ENCODE measurements at regions of chr14 and their contacts with region 1.

Region 1: DNA sequence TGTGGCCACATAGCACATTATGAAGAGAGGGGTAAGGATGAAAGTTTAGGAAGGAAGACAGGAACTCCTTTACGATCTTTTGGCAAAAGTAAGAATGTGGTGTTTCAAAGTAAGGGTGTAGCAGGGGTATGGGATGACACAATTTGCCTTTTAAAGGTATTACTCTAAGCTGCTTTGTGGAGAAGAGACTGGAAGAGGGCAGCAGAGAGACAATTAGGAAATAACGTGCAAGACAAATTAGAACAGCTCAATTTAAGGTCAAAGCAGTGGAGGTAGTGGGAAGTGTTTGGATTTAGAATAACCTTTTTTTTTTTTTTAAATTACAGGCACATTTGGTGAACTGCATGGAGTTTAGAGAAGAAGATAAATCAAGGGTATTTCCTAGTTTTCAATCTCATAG is 342.6 kb downstream of the NOVA1 start:
- DNase-seq: peak; percentile 31
- ATAC-seq: peak; percentile 63
- H3K4me3 ChIP-seq: no peak overlapping the region
- H3K27ac ChIP-seq: no peak overlapping the region
- H3K4me1 ChIP-seq: no peaks in the 10 kb centered on the region
- H3K27me3 ChIP-seq: no peaks in the 10 kb centered on the region
- CTCF ChIP-seq: peak; percentile 56
- POLR2A ChIP-seq: no peak
- RAD21 ChIP-seq: peak; percentile 59

Region 2: DNA sequence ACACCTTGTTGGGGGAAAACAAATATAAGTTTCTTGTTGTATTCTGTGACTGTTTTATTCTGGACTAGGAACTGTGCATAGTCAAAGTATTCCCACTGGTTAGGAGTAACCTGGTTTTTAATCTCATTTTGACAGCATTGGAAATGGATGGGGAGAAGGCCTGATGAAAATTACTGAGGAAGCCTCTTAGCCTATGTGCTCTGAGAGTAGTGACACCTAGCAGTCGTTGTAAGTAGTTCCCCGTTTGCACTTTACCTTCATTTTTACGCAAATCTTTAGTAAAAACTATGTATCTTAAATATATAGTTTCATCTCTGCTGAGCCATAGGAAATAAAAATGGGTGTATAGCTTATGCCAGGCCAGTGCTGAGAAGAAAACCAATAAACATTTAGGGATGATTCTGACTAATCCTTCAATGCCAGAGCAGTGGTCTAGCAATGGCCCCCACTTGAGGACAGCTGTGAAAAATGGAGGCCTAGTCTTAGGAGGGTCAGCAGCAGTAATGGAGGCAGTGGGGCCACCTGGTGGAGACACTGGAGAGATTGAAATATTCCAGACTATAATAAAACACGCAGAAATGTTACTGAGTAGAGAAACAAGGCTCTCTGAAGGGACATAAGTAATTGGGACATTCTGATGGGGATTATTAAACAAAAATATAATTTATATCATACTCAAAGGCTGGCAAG is 475.9 kb after region 1 on chr14:
- CTCF ChIA-PET with region 1: no interaction called
- POLR2A ChIA-PET with region 1: no interaction called
- dilution Hi-C with region 1: no loop called
- in situ Hi-C with region 1: no loop called
- intact Hi-C with region 1: loop called (anchors 1 kb)
- DNase-seq: peak; percentile 3
- ATAC-seq: peak; percentile 57; the same call in 1 of the 2 replicates
- H3K4me3 ChIP-seq: no peak overlapping the region
- H3K27ac ChIP-seq: no peak overlapping the region
- H3K4me1 ChIP-seq: no peaks in the 10 kb centered on the region
- H3K27me3 ChIP-seq: no peaks in the 10 kb centered on the region
- CTCF ChIP-seq: peak; percentile 50
- POLR2A ChIP-seq: no peak
- RAD21 ChIP-seq: peak; percentile 56

Region 3: DNA sequence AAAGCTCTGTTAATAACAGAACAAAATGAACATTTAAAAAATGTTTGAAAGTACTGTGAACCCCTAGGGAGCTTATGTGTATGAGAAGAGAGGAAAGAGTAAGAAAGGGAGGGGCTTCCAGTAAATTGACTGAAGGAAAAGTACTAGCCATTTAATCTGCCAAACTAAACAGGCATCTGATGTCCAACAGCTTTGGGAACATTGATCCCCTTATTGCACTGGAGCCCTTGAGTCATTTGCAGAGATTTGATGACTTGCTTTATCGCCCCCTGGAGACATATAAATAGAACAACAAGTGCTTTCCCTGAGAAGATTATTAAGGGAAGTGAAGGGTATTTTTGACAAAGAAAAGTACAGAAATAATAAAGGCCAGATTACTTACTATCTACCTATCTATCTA is 661.9 kb after region 1 on chr14:
- CTCF ChIA-PET with region 1: no interaction called
- POLR2A ChIA-PET with region 1: no interaction called
- dilution Hi-C with region 1: no loop called
- in situ Hi-C with region 1: no loop called
- intact Hi-C with region 1: loop called (anchors 5 kb)
- DNase-seq: peak; percentile 2
- ATAC-seq: no peak
- H3K4me3 ChIP-seq: no peak overlapping the region
- H3K27ac ChIP-seq: no peak overlapping the region
- H3K4me1 ChIP-seq: no peaks in the 10 kb centered on the region
- H3K27me3 ChIP-seq: no peaks in the 10 kb centered on the region
- CTCF ChIP-seq: peak; percentile 44
- POLR2A ChIP-seq: no peak
- RAD21 ChIP-seq: peak; percentile 37; the same call in 1 of the 2 replicates

Region 4: DNA sequence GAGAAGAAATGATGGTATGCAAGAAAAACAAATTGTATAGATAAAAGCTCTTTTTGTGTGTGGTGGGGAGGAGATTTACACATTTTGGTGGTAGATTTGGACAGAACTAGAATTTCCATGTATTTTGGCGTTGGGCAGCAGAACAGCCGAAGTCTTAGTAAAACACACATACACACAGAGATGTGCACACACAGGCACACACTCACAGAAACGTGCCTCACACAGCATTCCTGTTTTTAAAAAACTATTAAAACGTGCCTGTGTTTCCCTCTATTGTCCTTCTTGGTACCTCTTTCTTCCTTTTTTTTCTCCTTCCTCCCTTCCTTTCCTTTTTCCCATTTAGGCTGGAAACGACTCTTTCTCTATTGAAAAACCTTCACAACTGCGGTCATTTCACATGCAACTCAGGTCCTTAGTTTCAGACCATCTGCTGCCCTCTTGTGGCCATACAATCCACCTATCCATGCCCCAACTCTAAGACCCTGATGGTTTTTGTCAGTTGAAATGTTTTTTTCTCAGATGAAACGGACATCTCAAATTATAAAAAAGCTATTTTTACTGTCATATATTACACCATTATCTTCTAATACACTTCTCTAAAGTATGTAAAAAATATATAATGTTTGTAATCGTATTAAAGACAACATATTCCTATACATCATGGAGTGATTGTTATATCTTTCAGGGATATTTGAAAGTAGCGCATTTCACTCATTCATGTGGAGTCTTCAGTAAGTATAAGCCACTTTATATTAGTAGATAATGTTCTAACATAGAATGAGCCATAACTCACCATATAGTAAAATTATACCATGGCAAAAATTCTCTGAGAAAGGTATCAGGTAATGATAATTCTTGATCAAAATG is 729.3 kb after region 1 on chr14:
- CTCF ChIA-PET with region 1: no interaction called
- POLR2A ChIA-PET with region 1: no interaction called
- dilution Hi-C with region 1: no loop called
- in situ Hi-C with region 1: no loop called
- intact Hi-C with region 1: loop called (anchors 10 kb)
- DNase-seq: peak; percentile 31
- ATAC-seq: peak; percentile 53; the same call in 1 of the 2 replicates
- H3K4me3 ChIP-seq: no peak overlapping the region
- H3K27ac ChIP-seq: no peak overlapping the region
- H3K4me1 ChIP-seq: no peaks in the 10 kb centered on the region
- H3K27me3 ChIP-seq: no peaks in the 10 kb centered on the region
- CTCF ChIP-seq: peak; percentile 52
- POLR2A ChIP-seq: no peak
- RAD21 ChIP-seq: peak; percentile 44

Measured in IMR-90 (cell line).